MCF 10A (cell line): ENCODE measurements at regions of chr15 and their contacts with region 1.

Region 1: GRCh38 chr15:51536965-51537574 is 85.5 kb downstream of the DMXL2 start:
- DNase-seq: peak; percentile 30
- H3K4me3 Mint-ChIP-seq: no peak overlapping the region
- H3K27ac Mint-ChIP-seq: no peak overlapping the region
- H3K4me1 Mint-ChIP-seq: no peaks in the 10 kb centered on the region
- H3K27me3 Mint-ChIP-seq: no peaks in the 10 kb centered on the region
- CTCF ChIP-seq: peak; percentile 51

Region 2: GRCh38 chr15:51380999-51381795 is 155.9 kb before region 1 on chr15:
- CTCF ChIA-PET with region 1: no interaction called
- POLR2A ChIA-PET with region 1: no interaction called
- intact Hi-C with region 1: no loop called
- DNase-seq: peak; percentile 87
- H3K4me3 Mint-ChIP-seq: no peak overlapping the region
- H3K27ac Mint-ChIP-seq: no peak overlapping the region
- H3K4me1 Mint-ChIP-seq: peaks cover 13% of the 10 kb centered on the region
- H3K27me3 Mint-ChIP-seq: no peaks in the 10 kb centered on the region
- CTCF ChIP-seq: peak; percentile 82

Region 3: GRCh38 chr15:51524376-51524775 is 12.7 kb before region 1 on chr15:
- CTCF ChIA-PET with region 1: interaction called, 19 read pairs
- POLR2A ChIA-PET with region 1: no interaction called
- intact Hi-C with region 1: no loop called
- DNase-seq: no peak
- H3K4me3 Mint-ChIP-seq: no peak overlapping the region
- H3K27ac Mint-ChIP-seq: no peak overlapping the region
- H3K4me1 Mint-ChIP-seq: no peaks in the 10 kb centered on the region
- H3K27me3 Mint-ChIP-seq: no peaks in the 10 kb centered on the region
- CTCF ChIP-seq: no peak

Region 4: GRCh38 chr15:51622604-51623370 is 85.7 kb after region 1 on chr15 and contains the start of gene DMXL2:
- CTCF ChIA-PET with region 1: interaction called, 28 read pairs
- POLR2A ChIA-PET with region 1: interaction called, 15 read pairs
- intact Hi-C with region 1: loop called (anchors 1 kb)
- DNase-seq: peak; percentile 79
- H3K4me3 Mint-ChIP-seq: peak within 1 kb of the TSS; percentile 99
- H3K27ac Mint-ChIP-seq: peak within 1 kb of the TSS; percentile 90
- H3K4me1 Mint-ChIP-seq: peaks cover 27% of the 10 kb centered on the region
- H3K27me3 Mint-ChIP-seq: no peaks in the 10 kb centered on the region
- CTCF ChIP-seq: no peak
- total RNA-seq, gene DMXL2: 13.6 and 21.6 TPM in 2 replicates